Dorsolateral prefrontal cortex (tissue), 120 donors: ENCODE measurements at regions of chr2 and their contacts with region 1.

Region 1: DNA sequence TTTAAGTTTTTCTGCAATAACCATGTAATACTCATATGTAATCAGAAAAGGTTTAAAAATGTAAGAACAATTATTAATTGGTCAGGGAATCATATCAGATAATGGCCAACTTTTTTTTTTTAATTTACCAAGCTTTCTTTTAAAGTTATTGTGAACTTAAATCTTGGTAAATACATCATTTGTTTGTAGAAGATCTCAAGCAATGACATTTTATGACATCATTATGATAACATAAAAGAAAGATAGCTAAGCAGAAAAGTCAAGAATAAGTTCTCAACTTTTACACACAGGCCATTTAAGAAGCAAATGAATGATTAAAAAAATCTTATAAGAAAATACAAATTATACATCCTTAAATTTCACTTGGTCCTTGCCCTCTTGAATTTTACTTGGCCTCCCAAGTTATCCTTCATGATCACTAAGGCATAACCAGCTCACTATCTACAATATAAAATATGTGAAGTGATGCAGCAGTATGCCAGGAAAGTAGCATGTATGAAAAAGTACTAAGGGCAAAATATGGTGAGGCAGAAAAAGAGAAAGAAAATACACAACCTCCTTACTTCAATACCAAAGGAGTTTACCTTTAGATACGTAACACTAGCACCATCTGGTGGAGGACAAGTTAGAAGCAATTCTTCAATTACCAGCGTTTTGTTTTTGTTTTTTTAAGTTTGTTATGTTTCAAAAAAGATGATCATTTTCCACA is 116.6 kb downstream of the SRBD1 start:
- DNase-seq: no peak
- H3K4me3 ChIP-seq: no peak overlapping the region
- H3K27ac ChIP-seq: no peak overlapping the region
- H3K27me3 ChIP-seq: no peaks in the 10 kb centered on the region
- CTCF ChIP-seq: peak; percentile 70 to 97 (median 86)

Region 2: GRCh38 chr2:44974064-44974715 is 520.2 kb before region 1 on chr2:
- intact Hi-C with region 1: loop called in 1 of 2 experiments (anchors 5 kb)
- DNase-seq: no peak
- H3K4me3 ChIP-seq: no peak overlapping the region
- H3K27ac ChIP-seq: no peak overlapping the region
- H3K27me3 ChIP-seq: peaks cover 0 to 31% (median 6%) of the 10 kb centered on the region in 45 donors
- CTCF ChIP-seq: peak in 28 of 56 donors; percentile 8 to 43 (median 25)

Region 3: GRCh38 chr2:44981136-44982108 is 513.0 kb before region 1 on chr2:
- intact Hi-C with region 1: loop called (anchors 1 to 5 kb)
- DNase-seq: peak; percentile 63 to 83 (median 74)
- H3K4me3 ChIP-seq: peak overlapping the region in 1 of 59 donors; percentile 5
- H3K27ac ChIP-seq: no peak overlapping the region
- H3K27me3 ChIP-seq: peaks cover 0 to 13% (median 0%) of the 10 kb centered on the region in 45 donors
- CTCF ChIP-seq: peak; percentile 85 to 99 (median 95)